Endothelial cell of umbilical vein (primary cell): ENCODE measurements at regions of chr1 and their contacts with region 1.

Region 1: GRCh38 chr1:145714524-145715111 is 4.7 kb upstream of the CD160 start:
- DNase-seq: no peak
- H3K4me3 ChIP-seq: no peak overlapping the region
- H3K27ac ChIP-seq: no peak overlapping the region
- H3K4me1 ChIP-seq: no peaks in the 10 kb centered on the region
- H3K27me3 ChIP-seq: peaks cover 0 to 2% of the 10 kb centered on the region in 2 experiments
- CTCF ChIP-seq: no peak
- POLR2A ChIP-seq: no peak

Region 2: GRCh38 chr1:145695821-145696629 is 18.6 kb before region 1 on chr1:
- CTCF ChIA-PET with region 1: interaction called, 3 read pairs
- POLR2A ChIA-PET with region 1: no interaction called
- dilution Hi-C with region 1: no loop called
- intact Hi-C with region 1: loop called (anchors 2 kb)
- DNase-seq: no peak
- H3K4me3 ChIP-seq: no peak overlapping the region
- H3K27ac ChIP-seq: no peak overlapping the region
- H3K4me1 ChIP-seq: no peaks in the 10 kb centered on the region
- H3K27me3 ChIP-seq: peaks cover 4 to 5% of the 10 kb centered on the region in 2 experiments
- CTCF ChIP-seq: no peak
- POLR2A ChIP-seq: no peak